ENCODE measurements at regions of chr4 and their contacts with region 1.

Region 1: DNA sequence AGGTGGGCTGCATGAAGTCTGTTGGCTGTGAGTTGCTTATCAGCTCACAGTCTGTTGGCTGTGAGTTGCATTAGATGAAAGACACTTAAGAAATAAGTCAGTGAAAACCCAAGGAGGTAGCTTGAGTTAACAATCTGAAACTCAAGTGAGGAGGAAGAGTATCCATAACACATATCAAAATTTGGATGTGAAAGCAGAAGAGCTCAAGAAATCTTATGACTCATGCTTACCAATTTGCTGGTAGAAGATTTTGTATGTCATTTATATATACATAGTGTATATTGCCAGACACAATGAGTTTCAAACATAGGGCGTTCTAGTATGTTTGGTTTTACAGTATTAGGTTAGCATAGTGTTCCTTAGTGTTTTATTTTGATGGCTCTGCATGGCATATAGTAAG is 107.4 kb downstream of the DDIT4L start:
- DNase-seq: no peak
- H3K4me3 Mint-ChIP-seq: no peak overlapping the region
- H3K27ac Mint-ChIP-seq: peak overlapping the region; percentile 30
- H3K4me1 Mint-ChIP-seq: peaks cover 28% of the 10 kb centered on the region
- H3K27me3 Mint-ChIP-seq: no peaks in the 10 kb centered on the region

Region 2: GRCh38 chr4:99855678-99856077 is 227.2 kb before region 1 on chr4:
- intact Hi-C with region 1: no loop called
- DNase-seq: peak; percentile 82
- H3K4me3 Mint-ChIP-seq: peak overlapping the region; percentile 68
- H3K27ac Mint-ChIP-seq: peak overlapping the region; percentile 88
- H3K4me1 Mint-ChIP-seq: peaks cover 67% of the 10 kb centered on the region
- H3K27me3 Mint-ChIP-seq: no peaks in the 10 kb centered on the region

Region 3: DNA sequence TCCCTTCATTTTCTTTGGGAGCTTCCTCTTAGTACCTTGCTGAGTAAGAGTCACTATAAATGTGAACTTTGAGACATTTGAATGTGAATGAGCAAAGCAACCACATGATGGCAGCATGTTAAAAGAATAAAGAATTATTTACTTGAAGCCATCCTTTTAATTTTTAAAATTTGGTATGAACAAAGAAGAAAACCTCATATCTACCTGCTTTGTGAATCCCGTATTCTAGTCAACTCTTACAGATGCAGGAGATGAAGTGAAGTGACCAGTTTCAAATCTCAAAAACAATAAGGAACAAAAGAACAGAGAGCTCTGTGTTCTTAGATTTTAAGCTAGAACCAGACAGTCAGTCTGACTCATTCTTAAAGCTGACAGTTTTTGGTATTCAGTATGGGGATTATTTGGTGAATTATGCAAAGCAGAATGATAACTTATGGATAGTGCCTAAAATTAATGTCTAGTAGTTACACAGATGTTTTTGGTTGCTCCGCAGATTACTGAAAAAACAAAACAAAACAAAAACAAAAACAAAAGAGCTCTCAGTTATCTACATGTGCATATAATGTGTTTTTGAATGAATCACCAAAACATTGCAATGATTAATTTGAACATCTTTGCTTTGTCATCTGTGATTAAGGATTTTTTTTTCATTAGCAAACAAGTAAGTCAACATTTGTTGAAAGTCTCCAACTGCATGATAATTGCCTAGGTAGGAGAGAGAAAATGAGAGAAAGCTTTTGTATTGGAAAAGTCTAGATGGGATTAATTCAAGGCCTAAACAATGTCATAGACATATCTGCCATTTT is 84.6 kb before region 1 on chr4:
- intact Hi-C with region 1: loop called (anchors 5 kb)
- DNase-seq: no peak
- H3K4me3 Mint-ChIP-seq: no peak overlapping the region
- H3K27ac Mint-ChIP-seq: no peak overlapping the region
- H3K4me1 Mint-ChIP-seq: no peaks in the 10 kb centered on the region
- H3K27me3 Mint-ChIP-seq: peaks cover 7% of the 10 kb centered on the region

Region 4: DNA sequence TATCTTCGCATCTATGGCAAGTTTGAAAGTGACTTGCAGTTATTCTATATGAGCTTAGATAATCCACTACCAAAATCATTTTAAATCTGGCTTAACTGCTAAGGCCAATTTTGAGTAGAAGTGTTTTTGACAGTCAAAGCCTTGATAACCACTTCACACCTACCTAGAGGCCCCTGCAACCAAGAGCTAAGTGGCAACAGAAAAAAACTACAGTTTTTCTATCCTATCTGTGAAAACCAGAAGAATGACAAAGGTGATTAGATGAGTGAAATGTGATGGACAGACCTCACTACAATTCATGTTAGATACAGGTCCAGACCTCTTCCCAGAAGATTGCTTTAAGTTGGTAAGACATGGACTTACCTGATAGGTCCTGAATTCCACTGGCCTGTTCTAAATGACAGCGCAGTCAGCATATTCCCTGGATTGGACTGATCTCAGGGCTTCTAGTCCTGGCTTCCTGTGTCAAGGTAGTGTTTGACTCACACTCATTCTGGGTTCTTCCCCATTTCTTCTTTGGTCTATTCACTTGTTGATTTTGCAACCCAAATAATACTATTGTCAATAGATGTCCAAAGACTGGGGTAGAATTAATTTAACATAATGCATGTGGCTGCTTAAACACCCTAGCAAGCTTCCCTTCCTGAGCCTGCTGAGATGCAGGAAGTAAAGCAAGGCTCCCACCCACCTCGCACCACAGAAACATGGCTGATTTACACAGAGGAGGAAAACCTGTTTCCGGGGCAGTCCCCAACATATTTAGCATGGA is 1199.4 kb after region 1 on chr4:
- intact Hi-C with region 1: no loop called
- DNase-seq: peak; percentile 75
- H3K4me3 Mint-ChIP-seq: no peak overlapping the region
- H3K27ac Mint-ChIP-seq: no peak overlapping the region
- H3K4me1 Mint-ChIP-seq: peaks cover 28% of the 10 kb centered on the region
- H3K27me3 Mint-ChIP-seq: no peaks in the 10 kb centered on the region